Aorta (tissue), 5 donors: ENCODE measurements at regions of chr6 and their contacts with region 1.

Region 1: DNA sequence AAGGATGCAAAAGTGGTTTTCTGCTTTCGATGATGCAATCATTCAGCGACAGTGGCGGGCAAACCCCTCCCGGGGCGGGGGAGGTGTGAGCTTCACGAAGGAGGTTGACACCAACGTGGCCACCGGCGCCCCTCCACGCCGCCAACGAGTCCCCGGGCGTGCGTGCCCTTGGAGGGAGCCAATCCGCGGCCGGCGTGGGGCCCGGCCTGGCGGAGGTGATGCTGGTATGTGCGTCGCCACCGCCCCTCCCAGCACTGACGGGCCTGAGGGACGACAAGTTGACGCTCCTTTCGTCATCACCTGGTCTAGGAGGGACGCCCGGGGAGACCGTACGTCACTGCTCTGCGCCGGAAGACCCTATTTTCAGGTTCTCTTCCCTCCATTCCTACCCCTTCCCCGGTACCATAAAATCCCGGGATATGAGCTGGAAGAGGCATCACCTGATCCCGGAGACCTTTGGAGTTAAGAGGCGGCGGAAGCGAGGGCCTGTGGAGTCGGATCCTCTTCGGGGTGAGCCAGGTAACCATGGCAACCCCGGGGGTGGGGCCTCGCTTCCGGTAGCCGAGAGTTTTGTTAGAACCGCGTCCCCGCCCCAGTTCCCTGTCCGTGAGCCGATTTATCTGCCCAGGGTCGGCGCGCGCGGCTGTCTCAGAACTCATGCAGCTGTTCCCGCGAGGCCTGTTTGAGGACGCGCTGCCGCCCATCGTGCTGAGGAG is at the start of gene DXO:
- DNase-seq: peak; percentile 98
- ATAC-seq: peak; percentile 96
- H3K4me3 ChIP-seq: peak within 1 kb of the TSS; percentile 40 to 70
- H3K27ac ChIP-seq: peak within 1 kb of the TSS; percentile 83 to 85
- H3K4me1 ChIP-seq: no peaks in the 10 kb centered on the region
- H3K27me3 ChIP-seq: no peaks in the 10 kb centered on the region
- total RNA-seq, gene DXO: 20.2 to 20.5 TPM

Region 2: DNA sequence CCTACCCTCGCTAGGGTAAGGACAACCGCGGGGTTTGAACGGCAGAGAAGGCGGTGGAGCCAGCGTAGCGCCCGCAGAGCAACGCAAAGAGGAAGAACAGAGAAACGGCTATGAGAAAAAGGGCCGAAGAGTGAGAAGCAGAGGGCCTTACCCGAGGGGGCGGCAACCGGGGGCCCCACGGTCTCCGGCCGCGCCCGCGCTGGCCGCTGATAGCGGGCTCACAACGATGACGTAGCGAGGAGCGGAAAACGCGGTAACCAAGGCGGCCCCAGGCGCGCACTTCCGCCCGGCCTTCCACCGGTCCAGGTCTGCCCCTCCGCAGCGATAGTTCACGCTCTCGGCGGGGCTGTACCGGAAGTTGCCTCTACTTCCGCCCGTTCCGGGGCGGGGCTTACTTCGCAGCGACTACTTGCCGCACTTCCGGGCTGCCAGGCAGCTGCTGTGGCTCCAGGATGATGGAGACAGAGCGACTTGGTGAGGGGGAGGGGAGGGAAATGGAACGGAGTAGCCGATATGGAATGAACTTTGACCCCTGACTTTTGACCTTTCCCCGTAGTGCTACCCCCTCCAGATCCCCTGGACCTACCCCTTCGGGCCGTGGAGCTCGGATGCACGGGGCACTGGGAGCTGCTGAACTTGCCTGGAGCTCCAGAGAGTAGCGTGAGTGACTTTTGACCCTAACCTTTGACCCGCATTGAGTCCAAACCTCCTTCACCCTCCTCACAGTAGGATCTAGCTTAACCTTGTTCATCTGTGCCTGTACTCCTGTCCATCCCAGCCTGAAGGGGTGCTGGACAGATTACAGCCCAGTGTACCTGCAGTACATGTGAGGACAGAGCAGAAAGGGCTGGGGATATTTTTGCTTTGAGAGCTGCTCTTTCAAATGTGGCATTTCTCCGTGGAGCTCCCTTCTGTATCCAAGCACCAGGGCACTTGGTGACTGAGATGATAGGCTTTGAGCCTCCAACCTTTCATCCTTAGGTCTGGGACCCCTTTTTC is 13.1 kb before region 1 on chr6 and contains the starts of genes NELFE and SKIC2:
- intact Hi-C with region 1: loop called in 1 of 2 experiments (anchors 1 kb)
- DNase-seq: peak; percentile 99 to 100
- ATAC-seq: peak; percentile 99
- H3K4me3 ChIP-seq: peak within 1 kb of the TSS; percentile 67 to 73
- H3K27ac ChIP-seq: peak within 1 kb of the TSS in 1 of 2 donors; percentile 55
- H3K4me1 ChIP-seq: no peaks in the 10 kb centered on the region
- H3K27me3 ChIP-seq: no peaks in the 10 kb centered on the region
- total RNA-seq, gene NELFE: 42.2 to 55.5 TPM
- total RNA-seq, gene SKIC2: 53.8 to 90.3 TPM